ENCODE measurements at regions of chr6 and their contacts with region 1.

Region 1: GRCh38 chr6:73732845-73733675 is 37.1 kb downstream of the CD109 start:
- DNase-seq: peak; percentile 85
- ATAC-seq: peak; percentile 81
- H3K4me3 Mint-ChIP-seq: no peak overlapping the region
- H3K27ac Mint-ChIP-seq: no peak overlapping the region
- H3K4me1 Mint-ChIP-seq: peaks cover 14% of the 10 kb centered on the region
- H3K27me3 Mint-ChIP-seq: no peaks in the 10 kb centered on the region

Region 2: GRCh38 chr6:73665686-73666319 is 67.3 kb before region 1 on chr6:
- CTCF ChIA-PET with region 1: interaction called, 12 read pairs
- POLR2A ChIA-PET with region 1: no interaction called
- intact Hi-C with region 1: no loop called
- DNase-seq: no peak
- ATAC-seq: peak; percentile 87
- H3K4me3 Mint-ChIP-seq: no peak overlapping the region
- H3K27ac Mint-ChIP-seq: no peak overlapping the region
- H3K4me1 Mint-ChIP-seq: peaks cover 9% of the 10 kb centered on the region
- H3K27me3 Mint-ChIP-seq: peaks cover 19% of the 10 kb centered on the region

Region 3: DNA sequence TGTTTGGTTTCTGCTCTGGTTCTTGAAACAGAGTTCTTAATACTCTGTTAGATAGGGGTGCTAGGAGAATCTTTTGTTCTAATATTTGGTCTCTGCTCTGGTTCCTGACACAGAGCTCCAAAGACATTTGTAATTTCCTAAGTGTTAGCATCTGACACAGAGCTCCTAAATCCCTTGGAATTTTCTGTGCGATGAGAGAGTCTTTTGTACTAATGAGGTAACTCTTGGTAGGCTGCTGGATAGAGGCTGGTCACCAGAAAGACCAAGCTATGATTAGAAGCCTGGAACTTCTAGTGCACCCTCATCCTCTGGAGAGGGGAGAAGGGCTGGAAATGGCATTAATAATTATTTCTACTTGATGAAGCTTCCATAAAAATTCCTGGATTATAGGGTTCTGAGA is 44.7 kb before region 1 on chr6:
- CTCF ChIA-PET with region 1: interaction called, 14 read pairs
- POLR2A ChIA-PET with region 1: no interaction called
- intact Hi-C with region 1: no loop called
- DNase-seq: no peak
- ATAC-seq: no peak
- H3K4me3 Mint-ChIP-seq: no peak overlapping the region
- H3K27ac Mint-ChIP-seq: no peak overlapping the region
- H3K4me1 Mint-ChIP-seq: peaks cover 8% of the 10 kb centered on the region
- H3K27me3 Mint-ChIP-seq: peaks cover 17% of the 10 kb centered on the region

Region 4: DNA sequence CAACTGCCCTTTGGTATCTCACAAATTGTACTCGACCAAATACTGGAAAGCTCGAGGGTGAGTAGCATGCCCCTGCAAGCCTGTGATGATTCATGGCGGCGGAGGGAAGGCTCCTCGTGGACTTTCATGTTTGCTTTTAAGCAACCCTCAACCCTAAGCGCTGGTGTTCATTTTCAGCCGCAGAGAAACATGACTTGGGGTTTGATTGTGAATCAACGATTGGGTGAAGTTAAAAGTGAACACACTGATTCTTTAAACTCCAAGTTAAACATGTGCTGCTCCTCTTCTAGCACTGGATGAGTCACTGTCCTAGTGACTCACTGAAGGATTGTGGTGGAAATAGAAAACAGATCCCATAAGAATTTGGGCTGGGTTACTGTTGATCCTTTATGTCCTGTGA is 28.8 kb before region 1 on chr6:
- CTCF ChIA-PET with region 1: interaction called, 14 read pairs
- POLR2A ChIA-PET with region 1: no interaction called
- intact Hi-C with region 1: no loop called
- DNase-seq: peak; percentile 66
- ATAC-seq: peak; percentile 88
- H3K4me3 Mint-ChIP-seq: no peak overlapping the region
- H3K27ac Mint-ChIP-seq: no peak overlapping the region
- H3K4me1 Mint-ChIP-seq: peaks cover 32% of the 10 kb centered on the region
- H3K27me3 Mint-ChIP-seq: peaks cover 3% of the 10 kb centered on the region

Region 5: GRCh38 chr6:73722318-73723060 is 10.6 kb before region 1 on chr6:
- CTCF ChIA-PET with region 1: interaction called, 13 read pairs
- POLR2A ChIA-PET with region 1: no interaction called
- intact Hi-C with region 1: no loop called
- DNase-seq: peak; percentile 55
- ATAC-seq: peak; percentile 95
- H3K4me3 Mint-ChIP-seq: no peak overlapping the region
- H3K27ac Mint-ChIP-seq: peak overlapping the region; percentile 74
- H3K4me1 Mint-ChIP-seq: peaks cover 35% of the 10 kb centered on the region
- H3K27me3 Mint-ChIP-seq: no peaks in the 10 kb centered on the region

Measured in activated CD4-positive, alpha-beta T cell treated with anti-CD3 and anti-CD28 coated beads for 36 hours (primary cell).